ENCODE measurements at regions of chr3 and their contacts with region 1.

Region 1: GRCh38 chr3:108477511-108478147 is 32.8 kb downstream of the MYH15 start:
- DNase-seq: peak; percentile 10 to 72 (median 49)
- ATAC-seq: peak; percentile 90
- H3K4me3 ChIP-seq: no peak overlapping the region
- H3K4me3 Mint-ChIP-seq: no peak overlapping the region
- H3K27ac ChIP-seq: no peak overlapping the region
- H3K27ac Mint-ChIP-seq: no peak overlapping the region
- H3K4me1 ChIP-seq: no peaks in the 10 kb centered on the region
- H3K4me1 Mint-ChIP-seq: peaks cover 3% of the 10 kb centered on the region
- H3K27me3 ChIP-seq: no peaks in the 10 kb centered on the region
- H3K27me3 Mint-ChIP-seq: peaks cover 3% of the 10 kb centered on the region
- CTCF ChIP-seq: peak; percentile 82

Region 2: GRCh38 chr3:107660306-107660976 is 817.2 kb before region 1 on chr3:
- CTCF ChIA-PET with region 1: interaction called, 3 read pairs
- POLR2A ChIA-PET with region 1: no interaction called
- intact Hi-C with region 1: loop called in 1 of 2 experiments (anchors 5 kb)
- DNase-seq: peak in 2 of 9 experiments; percentile 52 to 61
- ATAC-seq: no peak
- H3K4me3 ChIP-seq: no peak overlapping the region
- H3K4me3 Mint-ChIP-seq: no peak overlapping the region
- H3K27ac ChIP-seq: no peak overlapping the region
- H3K27ac Mint-ChIP-seq: no peak overlapping the region
- H3K4me1 ChIP-seq: peaks cover 17% of the 10 kb centered on the region
- H3K4me1 Mint-ChIP-seq: peaks cover 31% of the 10 kb centered on the region
- H3K27me3 ChIP-seq: no peaks in the 10 kb centered on the region
- H3K27me3 Mint-ChIP-seq: no peaks in the 10 kb centered on the region
- CTCF ChIP-seq: peak; percentile 73

Region 3: GRCh38 chr3:107938143-107938542 is 539.5 kb before region 1 on chr3:
- CTCF ChIA-PET with region 1: interaction called, 11 read pairs
- POLR2A ChIA-PET with region 1: no interaction called
- intact Hi-C with region 1: no loop called
- DNase-seq: peak in 3 of 9 experiments; percentile 5 to 43 (median 30)
- ATAC-seq: no peak
- H3K4me3 ChIP-seq: no peak overlapping the region
- H3K4me3 Mint-ChIP-seq: no peak overlapping the region
- H3K27ac ChIP-seq: no peak overlapping the region
- H3K27ac Mint-ChIP-seq: no peak overlapping the region
- H3K4me1 ChIP-seq: no peaks in the 10 kb centered on the region
- H3K4me1 Mint-ChIP-seq: peaks cover 13% of the 10 kb centered on the region
- H3K27me3 ChIP-seq: no peaks in the 10 kb centered on the region
- H3K27me3 Mint-ChIP-seq: no peaks in the 10 kb centered on the region
- CTCF ChIP-seq: no peak

Region 4: GRCh38 chr3:108090701-108091451 is 386.8 kb before region 1 on chr3 and contains the start of gene CD47:
- CTCF ChIA-PET with region 1: no interaction called
- POLR2A ChIA-PET with region 1: no interaction called
- intact Hi-C with region 1: loop called in 1 of 2 experiments (anchors 10 kb)
- DNase-seq: peak; percentile 93 to 99 (median 97)
- ATAC-seq: peak; percentile 70
- H3K4me3 ChIP-seq: peak within 1 kb of the TSS; percentile 91 to 93
- H3K4me3 Mint-ChIP-seq: peak within 1 kb of the TSS; percentile 98
- H3K27ac ChIP-seq: peak within 1 kb of the TSS; percentile 93 to 94
- H3K27ac Mint-ChIP-seq: peak within 1 kb of the TSS; percentile 99
- H3K4me1 ChIP-seq: peaks cover 51% of the 10 kb centered on the region
- H3K4me1 Mint-ChIP-seq: peaks cover 39% of the 10 kb centered on the region
- H3K27me3 ChIP-seq: no peaks in the 10 kb centered on the region
- H3K27me3 Mint-ChIP-seq: no peaks in the 10 kb centered on the region
- CTCF ChIP-seq: no peak
- total RNA-seq, gene CD47: 118 to 125 TPM

Region 5: GRCh38 chr3:108159865-108160264 is 317.8 kb before region 1 on chr3:
- CTCF ChIA-PET with region 1: interaction called, 12 read pairs
- POLR2A ChIA-PET with region 1: no interaction called
- intact Hi-C with region 1: no loop called
- DNase-seq: no peak
- ATAC-seq: no peak
- H3K4me3 ChIP-seq: no peak overlapping the region
- H3K4me3 Mint-ChIP-seq: no peak overlapping the region
- H3K27ac ChIP-seq: no peak overlapping the region
- H3K27ac Mint-ChIP-seq: no peak overlapping the region
- H3K4me1 ChIP-seq: no peaks in the 10 kb centered on the region
- H3K4me1 Mint-ChIP-seq: no peaks in the 10 kb centered on the region
- H3K27me3 ChIP-seq: no peaks in the 10 kb centered on the region
- H3K27me3 Mint-ChIP-seq: no peaks in the 10 kb centered on the region
- CTCF ChIP-seq: no peak

Region 6: DNA sequence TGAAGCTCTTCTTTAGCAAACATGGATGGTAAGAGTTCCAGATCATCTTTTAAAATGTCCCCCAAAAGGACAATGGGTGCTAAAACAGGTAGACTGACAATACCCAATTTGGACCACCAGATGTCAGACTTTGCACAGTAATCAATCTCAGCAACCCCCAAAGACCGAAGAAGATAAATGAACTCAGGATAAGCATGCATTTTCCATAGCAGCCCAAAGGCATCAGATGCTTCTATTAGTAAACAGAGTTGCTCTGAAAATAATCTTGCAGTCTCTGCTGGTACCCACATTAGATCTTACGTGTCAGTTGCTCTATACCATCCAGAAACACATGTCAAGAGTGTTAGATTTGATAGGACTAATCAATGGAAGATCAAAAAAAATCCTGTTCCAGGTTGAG is 12.1 kb after region 1 on chr3:
- CTCF ChIA-PET with region 1: interaction called, 46 read pairs
- POLR2A ChIA-PET with region 1: no interaction called
- intact Hi-C with region 1: no loop called
- DNase-seq: peak in 7 of 9 experiments; percentile 7 to 80 (median 37)
- ATAC-seq: peak; percentile 93
- H3K4me3 ChIP-seq: no peak overlapping the region
- H3K4me3 Mint-ChIP-seq: no peak overlapping the region
- H3K27ac ChIP-seq: no peak overlapping the region
- H3K27ac Mint-ChIP-seq: no peak overlapping the region
- H3K4me1 ChIP-seq: no peaks in the 10 kb centered on the region
- H3K4me1 Mint-ChIP-seq: peaks cover 3% of the 10 kb centered on the region
- H3K27me3 ChIP-seq: peaks cover 0 to 2% of the 10 kb centered on the region in 2 experiments
- H3K27me3 Mint-ChIP-seq: peaks cover 3% of the 10 kb centered on the region
- CTCF ChIP-seq: peak; percentile 85